ENCODE measurements at regions of chr2 and their contacts with region 1.

Region 1: DNA sequence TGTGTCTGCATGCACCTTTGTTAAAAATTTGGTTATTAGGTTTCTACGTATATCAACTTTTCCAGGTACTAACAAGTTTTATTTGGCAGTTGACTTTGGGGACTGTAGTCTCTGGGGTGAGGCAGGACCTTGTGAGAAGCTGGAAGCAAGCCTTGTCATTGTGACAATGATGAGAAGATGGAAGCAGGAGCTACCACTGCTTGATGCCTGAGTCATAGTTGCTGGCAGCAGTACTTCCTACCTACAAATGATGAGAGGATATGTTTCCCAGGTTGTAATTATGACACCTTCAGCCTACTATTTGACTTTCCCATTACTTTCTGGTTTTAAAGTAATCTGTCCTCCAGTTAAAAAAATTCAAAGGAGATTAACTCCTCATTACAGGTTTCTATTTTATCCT is 516.3 kb downstream of the NRXN1 start:
- DNase-seq: no peak
- CTCF ChIP-seq: no peak

Region 2: DNA sequence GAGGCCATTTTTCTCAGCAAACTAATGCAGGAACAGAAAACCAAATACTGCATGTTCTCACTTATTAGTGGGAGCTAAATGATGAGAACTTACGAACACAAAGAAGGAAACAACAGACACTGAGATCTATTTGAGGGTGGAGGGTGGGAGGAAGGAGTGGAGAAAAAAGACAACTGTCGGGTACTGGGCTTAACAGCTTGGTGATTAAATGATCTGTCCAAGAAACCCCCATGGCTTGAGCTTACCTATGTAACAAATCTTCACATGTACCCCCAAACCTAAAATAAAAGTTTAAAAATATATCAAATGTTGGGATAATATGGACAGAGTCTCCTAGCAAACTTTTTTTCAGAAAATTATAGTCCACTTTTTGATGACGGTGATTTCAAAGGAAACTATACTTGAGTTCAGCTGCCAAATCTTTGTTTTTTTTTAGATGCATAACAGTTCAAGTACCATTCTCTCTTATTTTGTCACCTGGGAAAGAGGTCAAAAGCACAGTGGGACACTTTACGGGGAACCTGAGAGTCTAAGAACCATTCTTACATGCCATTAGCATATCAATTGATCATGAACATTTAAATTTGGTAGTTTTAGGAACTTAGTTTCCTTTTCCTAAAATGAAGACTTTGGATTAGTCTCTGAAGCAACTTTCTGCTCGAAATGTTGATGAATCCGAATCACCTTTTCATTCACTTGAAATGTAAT is 318.7 kb before region 1 on chr2:
- CTCF ChIA-PET with region 1: no interaction called
- POLR2A ChIA-PET with region 1: no interaction called
- DNase-seq: no peak
- CTCF ChIP-seq: no peak

Region 3: GRCh38 chr2:50529600-50530218 is 14.1 kb after region 1 on chr2:
- CTCF ChIA-PET with region 1: interaction called, 14 read pairs
- POLR2A ChIA-PET with region 1: no interaction called
- DNase-seq: peak; percentile 20
- CTCF ChIP-seq: peak; percentile 67